IMR-90 (cell line): ENCODE measurements at regions of chr7 and their contacts with region 1.

Region 1: DNA sequence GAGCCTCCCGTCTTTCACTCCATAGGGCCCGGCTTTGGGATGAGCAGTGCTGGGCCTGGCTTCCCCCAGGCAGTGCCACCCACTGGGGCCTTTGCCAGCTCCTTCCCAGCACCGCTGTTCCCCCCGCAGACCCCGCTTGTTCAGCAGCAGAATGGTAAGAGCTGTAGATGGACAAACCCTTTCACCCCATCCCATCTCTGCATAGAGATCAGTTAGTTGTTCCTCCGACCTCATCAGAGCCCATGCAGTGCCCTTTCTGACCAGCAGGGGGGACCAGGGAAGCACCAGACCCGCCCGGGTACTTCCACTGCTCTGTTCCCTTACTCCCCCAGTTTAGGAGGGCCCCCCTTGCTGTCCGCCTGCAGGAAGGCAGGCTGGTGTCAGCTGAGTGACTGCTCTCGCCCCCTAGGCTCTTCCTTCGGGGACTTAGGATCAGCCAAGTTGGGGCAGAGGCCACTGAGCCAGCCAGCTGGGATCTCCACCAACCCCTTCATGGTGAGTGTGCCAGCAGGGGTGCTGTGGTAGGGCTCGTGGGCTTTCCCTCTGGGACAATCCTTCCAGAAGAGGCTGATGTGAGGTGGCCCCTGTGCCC is 9.8 kb downstream of the SAP25 start:
- DNase-seq: peak; percentile 63
- ATAC-seq: peak; percentile 94
- H3K4me3 ChIP-seq: no peak overlapping the region
- H3K27ac ChIP-seq: no peak overlapping the region
- H3K4me1 ChIP-seq: peaks cover 2% of the 10 kb centered on the region; the same call in 1 of the 2 replicates
- H3K27me3 ChIP-seq: no peaks in the 10 kb centered on the region
- CTCF ChIP-seq: peak; percentile 89
- POLR2A ChIP-seq: no peak
- RAD21 ChIP-seq: peak; percentile 84

Region 2: DNA sequence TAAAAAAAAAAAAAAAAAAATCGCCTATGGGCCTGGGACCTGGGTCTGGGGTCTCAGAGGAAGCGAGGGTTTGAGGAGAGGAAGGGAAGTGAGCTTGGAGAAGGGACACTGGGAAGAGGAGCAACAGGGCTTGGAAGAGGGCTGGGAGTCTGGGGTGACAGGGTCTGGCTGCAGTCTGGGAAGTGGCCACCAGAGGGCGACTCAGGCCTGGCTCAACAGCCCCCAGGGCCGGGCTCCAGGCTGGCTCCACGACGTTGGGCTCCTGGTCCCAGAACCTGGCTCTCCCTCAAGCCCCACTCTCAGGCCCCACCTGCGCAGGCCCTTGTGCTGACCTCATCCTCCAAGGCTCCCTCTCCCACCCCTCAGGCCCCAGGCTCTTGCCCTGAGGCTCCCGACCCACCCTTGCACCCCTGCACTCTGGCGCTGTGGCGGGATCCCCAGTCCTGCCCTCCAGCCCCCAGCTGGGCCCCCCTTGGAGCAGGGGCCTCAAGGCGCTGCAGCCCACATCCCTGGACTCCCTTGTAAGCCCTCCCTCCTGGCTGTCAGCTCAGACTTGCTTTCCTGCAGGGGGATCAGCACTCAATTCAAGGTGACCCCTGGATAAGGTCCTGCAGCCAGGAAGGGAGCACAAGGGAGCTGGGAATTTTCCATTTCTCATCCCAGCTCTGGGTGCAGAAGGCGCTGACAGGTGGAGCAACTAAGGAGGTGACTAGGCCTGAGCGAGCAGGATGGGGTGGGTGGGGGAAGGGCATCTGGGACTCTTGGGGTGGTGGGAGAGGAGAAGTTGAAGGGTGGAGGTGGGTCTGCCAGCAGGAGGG is 94.5 kb before region 1 on chr7:
- CTCF ChIA-PET with region 1: interaction called, 5 read pairs
- POLR2A ChIA-PET with region 1: no interaction called
- dilution Hi-C with region 1: no loop called
- in situ Hi-C with region 1: loop called (anchors 5 kb)
- intact Hi-C with region 1: loop called (anchors 1 kb)
- DNase-seq: peak; percentile 64
- ATAC-seq: peak; percentile 82
- H3K4me3 ChIP-seq: no peak overlapping the region
- H3K27ac ChIP-seq: no peak overlapping the region
- H3K4me1 ChIP-seq: peaks cover 7% of the 10 kb centered on the region
- H3K27me3 ChIP-seq: no peaks in the 10 kb centered on the region
- CTCF ChIP-seq: peak; percentile 96
- POLR2A ChIP-seq: no peak
- RAD21 ChIP-seq: peak; percentile 96

Region 3: GRCh38 chr7:100538654-100539435 is 25.1 kb before region 1 on chr7 and contains the start of gene AGFG2:
- CTCF ChIA-PET with region 1: interaction called, 11 read pairs
- POLR2A ChIA-PET with region 1: no interaction called
- dilution Hi-C with region 1: no loop called
- in situ Hi-C with region 1: no loop called
- intact Hi-C with region 1: no loop called
- DNase-seq: peak; percentile 99
- ATAC-seq: peak; percentile 99
- H3K4me3 ChIP-seq: peak within 1 kb of the TSS; percentile 61
- H3K27ac ChIP-seq: no peak within 1 kb of the TSS; the same call in 1 of the 2 replicates
- H3K4me1 ChIP-seq: peaks cover 3% of the 10 kb centered on the region
- H3K27me3 ChIP-seq: no peaks in the 10 kb centered on the region; the same call in 1 of the 2 replicates
- CTCF ChIP-seq: no peak
- POLR2A ChIP-seq: 0 out of 2 replicates have a peak, but pooled peaks have one; percentile 22
- RAD21 ChIP-seq: 0 out of 2 replicates have a peak, but pooled peaks have one; percentile 12
- total RNA-seq, gene AGFG2: 3.0 and 4.2 TPM in 2 replicates

Region 4: DNA sequence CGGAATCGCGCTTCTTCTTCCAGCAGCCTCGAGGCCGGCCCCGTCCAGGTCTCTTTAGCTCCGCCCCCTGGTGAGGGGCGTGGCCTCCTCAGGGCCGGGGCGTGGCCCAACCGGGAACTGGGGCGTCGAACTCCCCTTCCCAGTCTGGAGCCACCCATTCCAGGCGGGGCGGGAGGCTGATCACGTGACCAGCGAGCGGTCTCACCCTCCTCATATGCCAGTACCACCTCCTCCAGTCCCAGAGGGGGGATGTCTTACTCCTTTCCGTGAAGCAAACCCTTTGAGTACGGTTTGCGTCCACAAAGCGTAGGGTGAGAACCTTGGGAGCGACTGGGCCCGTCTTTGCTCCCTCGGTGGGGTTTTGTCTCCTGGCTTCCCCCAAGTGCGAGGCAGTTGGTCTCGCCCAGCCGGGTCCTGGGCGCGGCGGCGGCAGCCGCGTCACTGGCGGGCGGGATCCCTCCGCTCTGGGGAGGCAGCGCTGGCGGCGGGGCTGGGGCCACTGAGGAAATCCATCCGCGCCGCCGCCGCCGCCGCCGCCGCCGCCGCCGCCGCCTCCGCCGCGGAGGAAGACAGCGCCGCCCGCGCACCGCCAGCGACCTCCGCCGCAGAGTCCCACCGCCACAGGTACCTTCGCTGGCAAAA is 109.5 kb after region 1 on chr7 and contains the start of gene GNB2:
- CTCF ChIA-PET with region 1: no interaction called
- POLR2A ChIA-PET with region 1: interaction called, 19 read pairs
- dilution Hi-C with region 1: no loop called
- in situ Hi-C with region 1: loop called (anchors 5 kb)
- intact Hi-C with region 1: no loop called
- DNase-seq: peak; percentile 99
- ATAC-seq: peak; percentile 86
- H3K4me3 ChIP-seq: peak within 1 kb of the TSS; percentile 85
- H3K27ac ChIP-seq: peak within 1 kb of the TSS; percentile 97
- H3K4me1 ChIP-seq: peaks cover 4% of the 10 kb centered on the region; the same call in 1 of the 2 replicates
- H3K27me3 ChIP-seq: no peaks in the 10 kb centered on the region
- CTCF ChIP-seq: no peak
- POLR2A ChIP-seq: peak; percentile 25; the same call in 1 of the 2 replicates
- RAD21 ChIP-seq: no peak
- total RNA-seq, gene GNB2: 62.0 and 67.5 TPM in 2 replicates

Region 5: GRCh38 chr7:100691676-100692577 is 128.0 kb after region 1 on chr7:
- CTCF ChIA-PET with region 1: interaction called, 5 read pairs
- POLR2A ChIA-PET with region 1: no interaction called
- dilution Hi-C with region 1: no loop called
- in situ Hi-C with region 1: no loop called
- intact Hi-C with region 1: loop called (anchors 1 kb)
- DNase-seq: peak; percentile 61
- ATAC-seq: peak; percentile 70
- H3K4me3 ChIP-seq: peak overlapping the region; percentile 6; the same call in 1 of the 2 replicates
- H3K27ac ChIP-seq: no peak overlapping the region
- H3K4me1 ChIP-seq: peaks cover 20% of the 10 kb centered on the region
- H3K27me3 ChIP-seq: no peaks in the 10 kb centered on the region
- CTCF ChIP-seq: peak; percentile 84
- POLR2A ChIP-seq: no peak
- RAD21 ChIP-seq: peak; percentile 75